ENCODE measurements at regions of chr17 and their contacts with region 1.

Region 1: DNA sequence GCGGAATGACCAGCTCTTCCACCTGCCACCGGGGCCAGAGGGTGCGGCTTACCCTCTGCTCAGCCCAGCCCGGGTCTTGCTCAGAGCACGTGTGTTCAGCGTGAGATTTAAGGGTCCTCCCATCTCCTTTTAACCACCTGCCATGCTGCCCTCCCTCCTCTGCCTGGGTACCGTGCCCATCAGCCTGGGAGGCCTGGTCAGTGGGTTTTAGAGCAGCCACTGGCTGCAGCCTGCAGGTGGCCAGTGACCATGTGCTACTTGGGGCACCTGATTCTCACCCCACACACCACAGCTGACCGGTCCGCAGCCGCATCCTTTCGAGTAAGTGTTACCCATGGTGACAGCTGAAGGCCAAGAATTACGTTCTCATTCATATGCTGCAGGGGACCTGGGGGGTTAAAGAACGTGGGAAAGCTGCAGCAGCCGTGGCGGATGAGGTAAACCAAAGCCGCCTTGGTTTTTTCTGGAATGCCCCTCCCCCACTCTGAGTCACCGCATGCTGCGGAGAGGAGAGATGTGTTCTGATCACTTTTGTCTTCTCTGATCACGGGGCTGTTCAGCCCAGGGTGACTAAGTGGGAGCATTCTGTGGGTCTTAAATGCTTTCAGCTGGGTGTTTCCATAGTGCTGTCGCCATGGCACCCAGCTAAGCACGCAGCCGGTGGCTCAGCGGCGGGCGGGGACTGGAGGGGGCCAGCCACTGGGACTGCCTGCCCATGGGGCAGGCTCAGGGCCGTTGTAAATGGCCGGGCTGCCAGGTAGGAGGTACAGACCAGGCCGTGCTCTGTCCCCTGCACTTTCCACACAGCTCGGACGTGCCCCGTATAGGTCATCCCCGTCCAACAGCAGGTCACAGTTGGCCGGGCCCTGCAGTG is 59.8 kb downstream of the BAIAP2 start:
- DNase-seq: no peak
- H3K4me3 ChIP-seq: peak overlapping the region in 1 of 8 donors; percentile 11
- H3K27ac ChIP-seq: peak overlapping the region in 5 of 8 donors; percentile 8 to 41 (median 26)
- H3K4me1 ChIP-seq: peaks cover 9 to 60% (median 30%) of the 10 kb centered on the region in 6 donors
- H3K27me3 ChIP-seq: peaks cover 0 to 31% (median 0%) of the 10 kb centered on the region in 7 donors
- CTCF ChIP-seq: no peak
- POLR2A ChIP-seq: no peak

Region 2: DNA sequence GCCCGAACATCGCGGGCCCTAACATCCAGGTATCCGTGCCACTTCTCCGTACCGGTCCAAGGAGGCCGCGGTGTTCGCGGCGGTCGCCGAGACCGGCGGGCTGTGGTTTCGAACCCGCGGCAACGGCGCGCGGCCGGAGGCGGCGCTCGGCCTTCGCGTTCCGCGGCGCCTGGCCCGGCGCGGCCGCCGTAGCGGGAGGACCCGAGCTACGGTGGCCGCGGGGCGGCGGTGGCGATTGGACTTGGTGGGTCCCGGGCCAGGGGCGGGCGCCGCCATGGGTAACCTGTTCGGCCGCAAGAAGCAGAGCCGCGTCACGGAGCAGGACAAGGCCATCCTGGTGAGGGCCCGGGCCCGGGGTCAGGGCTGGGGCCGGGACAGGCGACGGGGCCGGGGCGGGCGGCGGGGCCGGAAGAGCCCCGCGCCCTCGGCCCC is 103.1 kb before region 1 on chr17 and contains the start of gene CHMP6:
- intact Hi-C with region 1: loop called (anchors 10 kb)
- DNase-seq: peak; percentile 94
- H3K4me3 ChIP-seq: peak within 1 kb of the TSS; percentile 74 to 100 (median 95)
- H3K27ac ChIP-seq: peak within 1 kb of the TSS; percentile 37 to 85 (median 70)
- H3K4me1 ChIP-seq: peaks cover 39 to 77% (median 62%) of the 10 kb centered on the region in 6 donors
- H3K27me3 ChIP-seq: no peaks in the 10 kb centered on the region
- CTCF ChIP-seq: peak in 2 of 11 experiments; percentile 29 to 30
- POLR2A ChIP-seq: peak in 1 of 3 donors; percentile 55
- total RNA-seq, gene CHMP6: 23.0 to 35.7 (median 31.5) TPM

Region 3: GRCh38 chr17:81020767-81021497 is 73.8 kb before region 1 on chr17:
- intact Hi-C with region 1: loop called (anchors 10 kb)
- DNase-seq: peak; percentile 73
- H3K4me3 ChIP-seq: no peak overlapping the region
- H3K27ac ChIP-seq: no peak overlapping the region
- H3K4me1 ChIP-seq: peaks cover 15 to 58% (median 37%) of the 10 kb centered on the region in 6 donors
- H3K27me3 ChIP-seq: peaks cover 0 to 25% (median 0%) of the 10 kb centered on the region in 7 donors
- CTCF ChIP-seq: no peak
- POLR2A ChIP-seq: no peak